ENCODE measurements at regions of chr3 and their contacts with region 1.

Region 1: DNA sequence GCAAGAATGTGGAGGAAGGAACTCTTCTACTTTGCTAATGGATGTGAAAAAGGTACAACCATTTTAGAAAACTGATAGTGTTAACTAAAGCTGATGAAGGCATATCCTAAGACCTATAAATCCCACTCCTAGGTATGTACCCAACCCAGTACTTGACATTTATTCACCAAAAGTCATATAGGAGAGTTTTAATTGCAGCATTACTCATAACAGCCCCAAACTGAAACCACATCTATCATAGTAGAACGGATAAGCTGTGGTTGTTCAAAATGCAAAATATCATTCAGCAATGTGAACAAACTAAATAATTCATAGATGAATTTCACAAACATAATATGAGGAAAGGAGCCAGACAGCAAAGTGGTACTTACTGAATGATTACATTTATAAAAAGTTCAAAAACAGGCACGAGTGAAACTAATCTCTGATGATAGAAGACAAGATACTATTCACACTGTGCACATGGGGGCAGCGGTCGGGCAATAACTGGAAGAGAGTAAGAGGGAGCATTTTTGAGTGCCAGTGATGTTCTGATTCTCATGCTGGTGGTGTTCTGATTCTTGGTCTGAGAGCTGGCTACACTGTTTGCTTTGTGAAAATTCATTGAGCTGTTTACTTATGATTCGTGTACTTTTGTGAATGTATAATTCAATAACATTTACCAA is 34.3 kb downstream of the GOLIM4 start:
- DNase-seq: no peak
- H3K4me3 ChIP-seq: no peak overlapping the region
- H3K27ac ChIP-seq: no peak overlapping the region; a peak in 1 of 4 replicates
- H3K4me1 ChIP-seq: peaks cover 6 to 20% of the 10 kb centered on the region in 2 experiments; a peak in 2 of 4 replicates
- H3K27me3 ChIP-seq: no peaks in the 10 kb centered on the region
- CTCF ChIP-seq: peak; percentile 40
- EP300 ChIP-seq: no peak
- RAD21 ChIP-seq: peak; percentile 53

Region 2: DNA sequence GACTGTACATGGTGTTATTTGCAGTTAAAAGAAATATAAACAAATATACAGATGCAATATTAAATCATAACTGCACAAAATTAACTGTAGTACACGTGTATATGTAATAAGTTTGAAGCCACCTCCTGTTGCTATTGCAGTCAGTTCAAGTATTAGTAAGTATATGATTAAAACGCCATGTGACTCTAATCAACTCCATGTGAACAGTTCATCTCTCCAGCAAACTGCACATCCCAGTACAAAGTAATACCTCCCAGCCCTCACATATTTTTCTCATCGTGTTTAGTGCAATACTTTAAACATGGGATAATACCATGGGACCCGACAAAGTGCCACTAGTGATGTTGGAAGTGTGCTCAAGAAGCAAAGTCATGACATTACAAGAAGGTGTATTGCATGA is 361.4 kb before region 1 on chr3:
- CTCF ChIA-PET with region 1: no interaction called
- POLR2A ChIA-PET with region 1: no interaction called
- DNase-seq: no peak
- H3K4me3 ChIP-seq: no peak overlapping the region
- H3K27ac ChIP-seq: no peak overlapping the region
- H3K4me1 ChIP-seq: no peaks in the 10 kb centered on the region; a peak in 1 of 4 replicates
- H3K27me3 ChIP-seq: no peaks in the 10 kb centered on the region
- CTCF ChIP-seq: no peak
- EP300 ChIP-seq: no peak
- RAD21 ChIP-seq: no peak

Region 3: GRCh38 chr3:168165390-168166269 is 104.2 kb after region 1 on chr3:
- CTCF ChIA-PET with region 1: interaction called, 25 read pairs
- POLR2A ChIA-PET with region 1: no interaction called
- DNase-seq: peak; percentile 64
- H3K4me3 ChIP-seq: no peak overlapping the region; a peak in 1 of 4 replicates
- H3K27ac ChIP-seq: no peak overlapping the region
- H3K4me1 ChIP-seq: no peaks in the 10 kb centered on the region
- H3K27me3 ChIP-seq: no peaks in the 10 kb centered on the region
- CTCF ChIP-seq: peak; percentile 87
- EP300 ChIP-seq: no peak
- RAD21 ChIP-seq: peak; percentile 96

Measured in SK-N-SH (cell line).